ENCODE measurements at regions of chr12 and their contacts with region 1.

Region 1: GRCh38 chr12:53213348-53213747 is 6.3 kb upstream of the ITGB7 start:
- DNase-seq: peak; percentile 77 to 84 (median 78)
- H3K4me3 ChIP-seq: no peak overlapping the region
- H3K4me3 Mint-ChIP-seq: peak overlapping the region in 1 of 8 donors; percentile 41
- H3K27ac ChIP-seq: peak overlapping the region; percentile 36
- H3K27ac Mint-ChIP-seq: peak overlapping the region; percentile 46 to 97 (median 87)
- H3K4me1 ChIP-seq: peaks cover 84% of the 10 kb centered on the region
- H3K4me1 Mint-ChIP-seq: peaks cover 45 to 81% (median 68%) of the 10 kb centered on the region in 4 donors
- H3K27me3 ChIP-seq: no peaks in the 10 kb centered on the region
- H3K27me3 Mint-ChIP-seq: no peaks in the 10 kb centered on the region

Region 2: GRCh38 chr12:52837413-52837741 is 376.0 kb before region 1 on chr12:
- CTCF ChIA-PET with region 1: no interaction called
- POLR2A ChIA-PET with region 1: no interaction called
- intact Hi-C with region 1: no loop called
- DNase-seq: no peak
- H3K4me3 ChIP-seq: no peak overlapping the region
- H3K4me3 Mint-ChIP-seq: no peak overlapping the region
- H3K27ac ChIP-seq: no peak overlapping the region
- H3K27ac Mint-ChIP-seq: peak overlapping the region in 1 of 7 donors; percentile 18
- H3K4me1 ChIP-seq: no peaks in the 10 kb centered on the region
- H3K4me1 Mint-ChIP-seq: peaks cover 3 to 12% (median 5%) of the 10 kb centered on the region in 4 donors
- H3K27me3 ChIP-seq: no peaks in the 10 kb centered on the region
- H3K27me3 Mint-ChIP-seq: peaks cover 10 to 18% of the 10 kb centered on the region in 2 donors

Region 3: DNA sequence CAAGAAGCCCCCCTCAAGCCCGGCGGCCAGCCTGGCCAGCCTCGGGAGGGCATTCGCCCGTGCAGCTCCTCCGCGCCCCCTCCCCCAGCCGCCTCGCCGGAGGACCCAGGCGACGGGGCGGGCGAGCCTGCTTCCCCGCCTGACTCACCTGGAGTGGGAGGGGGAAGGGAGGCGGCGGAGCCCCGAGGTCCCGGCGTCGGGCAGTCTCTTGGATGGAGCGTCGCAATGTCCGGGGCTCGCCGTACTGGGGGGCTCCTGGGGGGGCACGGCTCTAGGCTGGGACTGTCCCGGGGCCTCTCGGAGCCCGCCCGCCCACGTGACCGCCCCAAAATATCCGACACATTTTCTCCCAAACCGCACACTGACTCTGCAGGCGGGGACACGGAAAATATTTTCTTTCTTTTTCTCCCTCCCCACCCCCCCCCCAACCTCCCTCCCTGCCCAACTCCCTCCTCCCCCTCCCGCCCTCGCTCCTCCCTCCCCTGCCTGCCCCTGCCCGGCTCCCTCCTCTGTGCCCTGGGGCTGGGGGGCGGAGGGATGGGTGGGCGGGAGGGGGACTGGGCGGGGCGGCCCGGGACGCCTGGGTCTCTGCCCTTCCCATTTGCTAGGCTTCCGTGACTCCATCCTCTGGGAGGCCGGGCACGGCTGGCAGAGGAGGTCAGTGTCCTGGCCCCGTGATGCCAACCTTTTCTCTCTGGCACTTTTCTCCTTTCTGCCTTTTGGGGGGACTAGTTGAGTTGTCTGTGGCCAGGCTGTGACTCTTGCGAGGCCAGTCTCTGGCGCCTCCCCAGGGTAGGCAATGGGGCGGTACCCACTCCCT is 18.7 kb after region 1 on chr12 and contains the start of gene RARG:
- CTCF ChIA-PET with region 1: interaction called, 17 read pairs
- POLR2A ChIA-PET with region 1: interaction called, 333 read pairs
- intact Hi-C with region 1: no loop called
- DNase-seq: peak; percentile 64 to 83 (median 67)
- H3K4me3 ChIP-seq: peak within 1 kb of the TSS; percentile 63 to 90
- H3K4me3 Mint-ChIP-seq: peak within 1 kb of the TSS; percentile 87 to 98 (median 93)
- H3K27ac ChIP-seq: peak within 1 kb of the TSS; percentile 71
- H3K27ac Mint-ChIP-seq: peak within 1 kb of the TSS; percentile 89 to 98 (median 95)
- H3K4me1 ChIP-seq: peaks cover 92% of the 10 kb centered on the region
- H3K4me1 Mint-ChIP-seq: peaks cover 55 to 89% (median 74%) of the 10 kb centered on the region in 4 donors
- H3K27me3 ChIP-seq: no peaks in the 10 kb centered on the region
- H3K27me3 Mint-ChIP-seq: no peaks in the 10 kb centered on the region
- total RNA-seq, gene RARG: 84.7 to 86.0 TPM

Region 4: GRCh38 chr12:53251477-53252348 is 38.4 kb after region 1 on chr12:
- CTCF ChIA-PET with region 1: interaction called, 160 read pairs
- POLR2A ChIA-PET with region 1: interaction called, 207 read pairs
- intact Hi-C with region 1: loop called (anchors 1 kb)
- DNase-seq: peak; percentile 67 to 78 (median 71)
- H3K4me3 ChIP-seq: peak overlapping the region; percentile 73 to 92
- H3K4me3 Mint-ChIP-seq: peak overlapping the region; percentile 96 to 100 (median 98)
- H3K27ac ChIP-seq: peak overlapping the region; percentile 83
- H3K27ac Mint-ChIP-seq: peak overlapping the region; percentile 96 to 99 (median 98)
- H3K4me1 ChIP-seq: peaks cover 46% of the 10 kb centered on the region
- H3K4me1 Mint-ChIP-seq: peaks cover 23 to 52% (median 41%) of the 10 kb centered on the region in 4 donors
- H3K27me3 ChIP-seq: no peaks in the 10 kb centered on the region
- H3K27me3 Mint-ChIP-seq: no peaks in the 10 kb centered on the region

Region 5: DNA sequence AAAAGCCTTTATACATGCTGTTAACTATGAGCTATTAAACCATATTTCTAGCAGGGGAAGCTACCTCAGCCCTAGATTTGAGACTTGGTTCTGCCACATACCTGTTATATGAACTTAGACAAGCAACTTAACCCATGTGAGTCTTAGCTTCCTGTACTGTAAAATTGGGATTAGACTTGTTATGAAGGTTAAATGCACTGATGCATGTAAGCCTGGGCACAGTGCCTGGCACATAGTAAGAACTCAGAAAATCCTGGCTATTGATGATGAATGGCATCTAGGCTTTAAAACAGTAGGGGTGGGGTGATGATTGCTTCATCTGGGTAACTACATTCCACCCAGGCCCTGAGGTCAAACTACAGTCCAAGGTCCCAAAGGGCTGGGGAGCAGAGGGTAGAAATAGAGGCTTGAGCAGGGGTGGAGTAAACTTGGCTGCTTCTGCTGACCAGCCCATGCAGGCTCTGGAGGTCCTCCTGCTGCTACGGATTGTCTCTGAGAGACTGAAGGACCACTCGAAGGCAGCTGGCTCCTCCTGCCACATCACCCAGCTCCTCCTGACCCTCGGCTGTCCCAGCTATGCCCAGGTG is 66.0 kb after region 1 on chr12:
- CTCF ChIA-PET with region 1: interaction called, 339 read pairs
- POLR2A ChIA-PET with region 1: interaction called, 3 read pairs
- intact Hi-C with region 1: no loop called
- DNase-seq: no peak
- H3K4me3 ChIP-seq: no peak overlapping the region
- H3K4me3 Mint-ChIP-seq: no peak overlapping the region
- H3K27ac ChIP-seq: no peak overlapping the region
- H3K27ac Mint-ChIP-seq: peak overlapping the region in 2 of 7 donors; percentile 13 to 68
- H3K4me1 ChIP-seq: no peaks in the 10 kb centered on the region
- H3K4me1 Mint-ChIP-seq: no peaks in the 10 kb centered on the region
- H3K27me3 ChIP-seq: no peaks in the 10 kb centered on the region
- H3K27me3 Mint-ChIP-seq: no peaks in the 10 kb centered on the region

Region 6: GRCh38 chr12:53344824-53345485 is 131.6 kb after region 1 on chr12:
- CTCF ChIA-PET with region 1: interaction called, 27 read pairs
- POLR2A ChIA-PET with region 1: interaction called, 3 read pairs
- intact Hi-C with region 1: no loop called
- DNase-seq: peak; percentile 62 to 66 (median 65)
- H3K4me3 ChIP-seq: peak overlapping the region in 1 of 2 donors; percentile 73
- H3K4me3 Mint-ChIP-seq: peak overlapping the region; percentile 94 to 99 (median 98)
- H3K27ac ChIP-seq: peak overlapping the region; percentile 44
- H3K27ac Mint-ChIP-seq: peak overlapping the region; percentile 68 to 97 (median 94)
- H3K4me1 ChIP-seq: peaks cover 7% of the 10 kb centered on the region
- H3K4me1 Mint-ChIP-seq: peaks cover 11 to 18% (median 14%) of the 10 kb centered on the region in 4 donors
- H3K27me3 ChIP-seq: no peaks in the 10 kb centered on the region
- H3K27me3 Mint-ChIP-seq: no peaks in the 10 kb centered on the region

Region 7: DNA sequence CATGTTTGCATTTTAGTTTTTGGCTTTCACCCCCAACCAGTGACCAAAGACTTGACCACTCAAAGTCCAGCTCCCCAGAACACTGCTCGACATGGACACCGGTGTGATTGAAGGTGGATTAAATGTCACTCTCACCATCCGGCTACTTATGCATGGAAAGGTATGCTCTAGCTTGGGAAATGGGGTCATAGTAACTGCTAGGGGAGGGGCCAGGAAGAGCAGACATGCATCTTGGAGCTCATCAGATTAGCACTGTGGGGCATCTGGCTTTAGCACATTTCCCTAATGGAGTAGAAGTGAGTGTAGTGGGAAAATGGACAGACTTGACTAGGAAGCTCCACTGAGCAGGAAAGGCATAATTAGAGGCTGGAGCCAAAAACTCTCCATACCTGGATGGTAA is 241.4 kb after region 1 on chr12:
- CTCF ChIA-PET with region 1: no interaction called
- POLR2A ChIA-PET with region 1: no interaction called
- intact Hi-C with region 1: no loop called
- DNase-seq: no peak
- H3K4me3 ChIP-seq: no peak overlapping the region
- H3K4me3 Mint-ChIP-seq: peak overlapping the region; percentile 27 to 99 (median 56)
- H3K27ac ChIP-seq: no peak overlapping the region
- H3K27ac Mint-ChIP-seq: peak overlapping the region in 4 of 7 donors; percentile 60 to 99 (median 63)
- H3K4me1 ChIP-seq: peaks cover 34% of the 10 kb centered on the region
- H3K4me1 Mint-ChIP-seq: peaks cover 21 to 49% (median 34%) of the 10 kb centered on the region in 4 donors
- H3K27me3 ChIP-seq: no peaks in the 10 kb centered on the region
- H3K27me3 Mint-ChIP-seq: no peaks in the 10 kb centered on the region

Region 8: DNA sequence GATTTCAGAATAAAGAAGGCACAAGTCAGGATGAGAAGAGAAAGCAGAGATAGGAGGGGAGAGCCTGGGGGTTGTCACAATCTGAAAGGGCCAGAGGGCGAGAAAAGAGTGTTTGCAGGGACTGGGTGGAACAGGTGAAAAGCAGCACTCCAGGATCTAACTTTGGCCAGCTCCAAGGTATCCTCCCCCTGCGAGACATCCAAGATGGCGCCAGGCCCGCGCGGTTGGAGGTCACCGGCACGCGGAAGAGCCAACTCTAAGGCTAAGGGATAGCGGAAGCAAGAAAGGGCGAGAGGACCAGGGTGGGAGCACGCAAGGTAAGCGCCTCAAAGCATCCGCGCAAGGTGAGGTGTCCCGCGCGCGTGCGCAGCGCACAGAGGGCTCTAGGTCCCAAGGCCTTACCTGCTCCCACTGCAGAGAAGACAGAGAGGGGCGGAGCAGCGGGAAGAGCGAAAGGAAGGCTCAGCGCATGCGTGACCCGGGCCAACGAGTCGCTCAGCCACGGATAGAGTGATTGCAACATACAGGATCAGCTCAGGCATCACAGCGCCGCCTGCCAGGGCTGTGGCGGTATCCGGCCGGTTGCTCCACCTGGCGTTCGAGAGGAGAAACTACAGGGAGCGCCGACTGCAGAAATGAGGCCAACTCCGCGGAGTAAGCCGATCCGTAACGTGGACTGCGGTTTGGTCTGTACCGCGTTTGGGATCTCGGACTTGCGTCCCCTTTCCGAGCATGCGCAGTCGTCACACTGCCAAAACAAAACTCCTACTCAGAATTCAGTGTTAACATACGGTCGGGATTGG is 462.5 kb after region 1 on chr12 and contains the start of gene ATP5MC2:
- CTCF ChIA-PET with region 1: no interaction called
- POLR2A ChIA-PET with region 1: no interaction called
- intact Hi-C with region 1: no loop called
- DNase-seq: peak; percentile 96 to 98 (median 98)
- H3K4me3 ChIP-seq: peak within 1 kb of the TSS; percentile 82 to 89
- H3K4me3 Mint-ChIP-seq: peak within 1 kb of the TSS; percentile 91 to 98 (median 95)
- H3K27ac ChIP-seq: peak within 1 kb of the TSS; percentile 59
- H3K27ac Mint-ChIP-seq: peak within 1 kb of the TSS; percentile 93 to 98 (median 97)
- H3K4me1 ChIP-seq: peaks cover 36% of the 10 kb centered on the region
- H3K4me1 Mint-ChIP-seq: peaks cover 18 to 40% (median 31%) of the 10 kb centered on the region in 4 donors
- H3K27me3 ChIP-seq: peaks cover 8% of the 10 kb centered on the region
- H3K27me3 Mint-ChIP-seq: peaks cover 15% of the 10 kb centered on the region in 2 donors
- total RNA-seq, gene ATP5MC2: 238 to 246 TPM

Region 9: DNA sequence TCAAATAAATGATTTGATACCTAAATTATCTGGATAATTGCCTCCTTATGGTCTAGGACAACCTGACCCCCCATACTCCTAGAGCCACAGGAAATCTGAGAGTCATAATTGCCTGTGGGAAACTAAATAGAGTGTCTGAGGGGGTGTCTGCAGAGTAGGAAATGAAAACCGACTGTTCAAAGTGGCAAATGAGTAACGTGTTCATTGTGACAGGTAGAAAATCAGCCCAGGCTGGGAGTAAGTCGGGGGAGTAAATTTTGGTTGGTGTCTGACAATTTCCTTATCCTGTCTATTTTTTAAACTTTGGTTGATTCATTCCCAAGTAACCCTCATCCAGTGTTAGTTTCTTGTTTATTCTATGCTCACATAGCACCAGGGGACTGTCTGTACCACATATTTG is 673.7 kb after region 1 on chr12:
- CTCF ChIA-PET with region 1: no interaction called
- POLR2A ChIA-PET with region 1: no interaction called
- intact Hi-C with region 1: no loop called
- DNase-seq: no peak
- H3K4me3 ChIP-seq: no peak overlapping the region
- H3K4me3 Mint-ChIP-seq: no peak overlapping the region
- H3K27ac ChIP-seq: no peak overlapping the region
- H3K27ac Mint-ChIP-seq: no peak overlapping the region
- H3K4me1 ChIP-seq: no peaks in the 10 kb centered on the region
- H3K4me1 Mint-ChIP-seq: no peaks in the 10 kb centered on the region
- H3K27me3 ChIP-seq: peaks cover 13% of the 10 kb centered on the region
- H3K27me3 Mint-ChIP-seq: peaks cover 38 to 51% of the 10 kb centered on the region in 2 donors